ENCODE measurements at regions of chr7 and their contacts with region 1.

Region 1: DNA sequence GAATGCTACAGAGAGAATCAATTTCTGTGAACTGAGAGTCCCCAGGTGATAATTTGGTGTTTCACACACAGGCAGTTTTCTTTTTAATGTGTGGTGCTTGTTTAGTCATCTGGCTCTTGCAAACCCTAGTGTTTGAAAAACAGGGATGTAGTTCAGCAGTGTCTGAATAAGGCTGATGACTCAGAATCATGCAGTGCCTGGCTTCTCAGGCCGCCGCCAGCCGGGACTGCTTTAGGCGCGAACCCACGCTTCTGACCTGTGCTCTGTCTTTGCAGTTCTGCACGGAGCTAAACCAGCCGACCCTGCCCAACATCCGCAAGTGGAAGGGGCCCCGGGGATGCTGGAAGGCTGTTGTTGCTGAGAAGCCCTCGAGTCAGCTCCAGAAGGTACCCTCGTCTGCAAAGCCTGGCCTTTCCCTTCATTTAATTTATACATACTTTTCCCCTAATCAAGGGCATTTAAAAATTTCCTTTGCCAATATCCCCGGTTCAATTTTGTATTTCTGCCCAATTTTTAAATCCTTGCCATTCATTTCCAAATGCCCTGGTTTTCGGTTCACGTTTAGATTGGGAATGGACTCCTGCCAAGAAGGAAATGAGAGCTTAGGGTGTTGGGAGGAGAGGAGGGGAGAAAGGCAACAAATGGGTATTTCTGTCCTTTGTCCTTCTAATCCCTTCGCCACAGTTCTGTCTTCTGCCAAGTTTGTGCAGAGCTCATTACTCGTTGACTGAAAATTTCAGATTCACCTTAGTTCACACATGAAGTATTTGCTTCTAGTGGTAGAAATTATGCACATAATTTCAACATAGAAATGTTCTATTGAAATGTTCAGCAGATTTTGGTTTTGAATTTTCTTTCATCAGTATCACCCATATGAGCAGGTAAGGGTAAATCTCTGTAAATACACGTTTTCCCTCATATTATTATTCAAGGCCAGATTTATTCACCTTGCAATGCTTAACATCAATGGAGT is 108.5 kb upstream of the ANLN start:
- DNase-seq: no peak
- H3K4me3 ChIP-seq: no peak overlapping the region
- H3K27ac ChIP-seq: peak overlapping the region in 2 of 8 donors; percentile 4 to 26
- H3K4me1 ChIP-seq: peaks cover 19 to 59% (median 45%) of the 10 kb centered on the region in 6 donors
- H3K27me3 ChIP-seq: peaks cover 0 to 3% (median 0%) of the 10 kb centered on the region in 7 donors
- CTCF ChIP-seq: no peak
- POLR2A ChIP-seq: no peak

Region 2: DNA sequence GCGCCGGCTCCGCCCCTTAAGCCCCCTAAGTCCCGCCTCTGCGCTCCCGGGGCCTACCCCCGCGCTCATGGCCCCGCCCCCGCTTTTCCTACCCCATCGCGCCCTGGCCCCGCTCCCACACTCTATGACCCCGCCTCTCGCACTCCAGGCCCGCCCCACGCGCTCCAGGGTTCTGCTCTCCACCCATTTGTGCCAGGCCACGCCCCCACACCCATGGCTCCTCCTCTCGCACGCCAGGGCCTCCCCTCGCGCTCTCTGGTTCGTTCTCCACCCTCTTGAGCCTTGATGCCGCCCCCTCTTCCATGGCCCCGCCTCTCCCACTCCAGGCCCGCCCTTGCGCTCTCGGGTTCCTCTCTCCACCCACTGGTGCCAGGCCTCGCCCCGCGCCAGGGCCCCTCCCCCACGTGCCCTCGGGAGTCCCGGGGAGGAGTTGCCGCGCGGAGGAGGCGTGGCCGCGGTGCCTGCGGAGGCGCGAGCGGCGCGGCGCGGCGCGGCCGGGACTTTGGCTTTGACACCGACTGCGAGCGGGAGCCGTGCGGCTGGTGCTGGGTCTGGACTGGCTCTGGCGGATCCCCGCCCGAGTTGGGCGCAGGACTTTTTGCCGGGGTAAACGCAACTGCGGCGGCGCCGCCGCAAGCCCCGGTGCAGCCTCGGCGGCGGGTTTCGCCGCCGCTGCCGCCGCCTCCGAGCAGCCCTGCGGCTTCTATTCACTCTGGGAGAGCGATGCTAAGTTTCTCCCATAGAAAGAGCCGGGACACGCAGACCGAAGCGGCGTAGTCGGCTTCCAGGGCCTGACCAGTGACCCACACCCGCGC is 128.2 kb before region 1 on chr7 and contains the start of gene EEPD1:
- intact Hi-C with region 1: loop called (anchors 10 kb)
- DNase-seq: peak; percentile 100
- H3K4me3 ChIP-seq: peak within 1 kb of the TSS; percentile 62 to 90 (median 77)
- H3K27ac ChIP-seq: peak within 1 kb of the TSS; percentile 68 to 94 (median 85)
- H3K4me1 ChIP-seq: peaks cover 14 to 56% (median 42%) of the 10 kb centered on the region in 6 donors
- H3K27me3 ChIP-seq: no peaks in the 10 kb centered on the region
- CTCF ChIP-seq: peak in 2 of 11 experiments; percentile 21 to 45
- POLR2A ChIP-seq: peak in 1 of 3 donors; percentile 73
- total RNA-seq, gene EEPD1: 8.9 to 23.4 (median 15.0) TPM